ENCODE measurements at regions of chr12 and their contacts with region 1.

Region 1: DNA sequence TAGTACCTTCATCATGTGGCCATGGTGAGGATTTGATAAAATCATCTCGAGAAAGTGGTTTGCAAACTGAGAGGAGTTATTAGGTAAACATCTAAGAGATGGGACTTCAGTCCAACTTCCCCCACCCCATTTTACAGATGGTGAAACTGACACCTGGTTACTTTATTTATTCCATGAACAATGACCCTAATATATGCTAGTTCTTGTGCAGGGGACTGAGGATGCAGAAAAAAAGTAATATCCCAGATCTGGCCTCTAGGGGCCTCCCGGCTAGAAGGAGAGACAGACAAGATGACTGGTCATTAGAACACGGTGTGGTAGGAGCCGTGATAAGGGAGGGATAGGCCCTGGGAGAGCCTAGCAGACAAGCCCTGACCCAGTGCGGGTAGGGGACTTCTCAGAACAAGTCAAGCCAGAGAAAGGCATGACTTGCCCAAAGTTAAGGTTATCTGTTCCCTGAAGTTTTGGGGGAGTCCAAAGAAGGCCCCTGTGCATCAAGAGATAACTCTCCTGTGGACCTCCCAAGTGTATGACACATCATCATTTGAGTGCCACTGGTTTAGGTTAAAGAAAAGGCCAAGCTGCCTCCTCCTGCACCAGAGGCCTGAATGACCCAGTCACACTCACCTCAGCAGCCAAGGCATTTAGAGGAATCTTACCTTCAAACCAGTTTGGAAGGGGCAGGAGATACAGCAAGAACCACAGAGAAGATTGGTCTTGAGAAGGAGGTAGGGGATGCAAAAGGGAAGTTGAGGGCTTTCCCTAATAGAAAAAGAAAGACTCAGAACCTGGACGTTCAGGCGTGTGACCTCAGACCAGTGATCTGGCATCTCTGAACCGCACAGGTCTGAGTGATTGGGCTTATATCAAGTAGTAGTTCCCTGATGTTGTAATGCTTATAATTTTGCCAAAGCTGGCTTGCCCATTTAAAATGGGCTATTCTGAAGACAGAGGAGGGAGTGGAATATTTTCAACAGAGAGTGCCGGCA is 1.6 kb downstream of the CMKLR1 start:
- DNase-seq: no peak
- ATAC-seq: peak in 4 of 8 donors; percentile 29 to 34 (median 30)
- H3K4me3 ChIP-seq: peak overlapping the region in 9 of 10 donors; percentile 7 to 58 (median 54)
- H3K27ac ChIP-seq: peak overlapping the region in 9 of 10 donors; percentile 13 to 90 (median 76)
- H3K4me1 ChIP-seq: peaks cover 6 to 73% (median 31%) of the 10 kb centered on the region in 9 donors
- H3K27me3 ChIP-seq: peaks cover 0 to 14% (median 0%) of the 10 kb centered on the region in 7 donors
- CTCF ChIP-seq: peak in 8 of 9 donors; percentile 21 to 55 (median 48)

Region 2: GRCh38 chr12:107859367-107859766 is 478.2 kb before region 1 on chr12:
- intact Hi-C with region 1: no loop called
- DNase-seq: no peak
- ATAC-seq: no peak
- H3K4me3 ChIP-seq: no peak overlapping the region
- H3K27ac ChIP-seq: no peak overlapping the region
- H3K4me1 ChIP-seq: peaks cover 0 to 8% (median 0%) of the 10 kb centered on the region in 9 donors
- H3K27me3 ChIP-seq: peaks cover 4 to 76% (median 51%) of the 10 kb centered on the region in 7 donors
- CTCF ChIP-seq: no peak

Region 3: DNA sequence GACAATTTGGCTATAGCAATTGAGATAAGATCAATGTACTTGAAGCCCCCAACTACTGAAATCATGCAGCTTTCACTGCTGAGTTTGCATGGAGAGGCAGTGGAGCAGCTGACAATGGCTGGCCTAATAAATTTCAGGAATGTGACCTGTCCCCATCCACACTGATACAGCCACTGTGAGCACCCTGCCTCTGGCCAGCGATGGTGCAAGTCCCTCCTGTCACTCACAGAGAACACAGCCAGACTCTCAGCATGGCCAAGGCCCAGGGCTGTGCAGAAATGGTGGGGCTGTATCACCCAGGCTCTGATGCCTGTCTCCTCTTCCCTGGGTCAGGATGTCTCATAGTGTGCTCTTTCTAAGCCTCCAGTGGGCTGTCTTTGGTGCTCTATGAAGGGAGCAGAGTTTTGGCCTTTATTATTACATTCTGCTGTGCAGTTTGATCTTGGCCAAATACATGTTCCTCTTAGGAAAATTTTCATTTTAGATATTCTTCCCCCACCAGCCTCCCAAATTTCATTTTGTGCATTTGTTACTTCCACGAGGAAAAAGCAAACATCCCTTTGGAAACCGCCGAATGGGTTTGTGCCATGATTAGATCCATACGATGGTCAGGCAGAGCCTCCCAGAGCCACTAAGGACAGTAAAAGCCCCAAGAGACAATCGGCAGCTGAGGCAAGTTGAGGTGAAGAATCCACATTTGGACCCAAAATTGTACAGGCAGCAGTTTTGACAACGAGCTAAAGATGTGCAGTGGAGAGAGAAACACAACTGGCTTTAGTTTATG is 293.6 kb before region 1 on chr12:
- intact Hi-C with region 1: no loop called
- DNase-seq: no peak
- ATAC-seq: no peak
- H3K4me3 ChIP-seq: no peak overlapping the region
- H3K27ac ChIP-seq: no peak overlapping the region
- H3K4me1 ChIP-seq: peaks cover 0 to 25% (median 3%) of the 10 kb centered on the region in 9 donors
- H3K27me3 ChIP-seq: peaks cover 0 to 36% (median 6%) of the 10 kb centered on the region in 7 donors
- CTCF ChIP-seq: no peak

Region 4: DNA sequence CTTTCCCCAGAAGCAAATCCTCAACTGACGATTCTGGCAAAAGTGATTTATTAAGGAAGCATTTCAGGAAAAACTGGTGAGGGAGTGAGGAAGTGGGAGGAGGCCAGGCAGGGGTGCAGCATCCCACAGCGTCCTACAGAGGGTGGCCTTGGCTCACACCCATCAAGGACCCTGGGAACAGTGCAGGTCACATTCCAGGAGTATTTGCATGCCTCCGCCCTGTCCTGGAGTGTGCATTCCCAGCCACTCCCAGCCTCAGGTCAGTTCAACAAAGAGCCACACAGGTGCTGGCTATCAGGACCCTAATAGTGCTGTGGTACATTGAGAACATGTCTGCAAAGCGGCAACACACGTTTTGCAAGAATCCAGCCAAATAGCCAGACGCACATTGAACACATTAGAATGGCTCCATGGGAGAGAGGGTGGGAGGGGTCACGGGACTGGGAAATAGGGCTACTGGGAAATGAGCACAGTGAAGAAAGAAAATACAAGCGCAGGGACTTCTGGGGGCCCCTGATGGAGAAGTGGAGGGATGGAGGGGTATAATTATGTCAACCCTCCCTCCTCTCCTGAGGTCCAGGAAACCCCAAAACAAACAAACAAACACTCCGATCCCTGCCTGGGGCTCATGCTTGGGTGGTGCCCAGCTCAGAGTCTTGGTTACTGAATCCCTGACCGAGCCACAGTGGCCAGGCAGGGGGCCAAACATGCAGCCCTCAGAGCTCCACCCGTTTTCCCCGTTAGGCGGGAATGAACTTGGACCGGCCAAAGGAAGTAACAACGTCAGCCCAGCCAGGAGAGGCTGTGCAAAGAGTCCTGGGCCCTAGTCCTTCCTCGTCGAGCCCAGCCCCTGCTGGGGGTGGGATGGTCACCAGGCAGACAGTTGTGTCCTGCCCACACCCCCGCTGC is 34.9 kb before region 1 on chr12:
- intact Hi-C with region 1: loop called in 1 of 10 experiments (anchors 5 kb)
- DNase-seq: peak; percentile 81 to 88
- ATAC-seq: peak; percentile 65 to 86 (median 80)
- H3K4me3 ChIP-seq: no peak overlapping the region
- H3K27ac ChIP-seq: peak overlapping the region; percentile 51 to 95 (median 86)
- H3K4me1 ChIP-seq: peaks cover 35 to 98% (median 58%) of the 10 kb centered on the region in 9 donors
- H3K27me3 ChIP-seq: no peaks in the 10 kb centered on the region
- CTCF ChIP-seq: peak in 4 of 9 donors; percentile 10 to 38 (median 21)